Activated B cell treated with CpG ODN at 0.5 μM for 24 hours (primary cell): ENCODE measurements at regions of chr15 and their contacts with region 1.

Region 1: DNA sequence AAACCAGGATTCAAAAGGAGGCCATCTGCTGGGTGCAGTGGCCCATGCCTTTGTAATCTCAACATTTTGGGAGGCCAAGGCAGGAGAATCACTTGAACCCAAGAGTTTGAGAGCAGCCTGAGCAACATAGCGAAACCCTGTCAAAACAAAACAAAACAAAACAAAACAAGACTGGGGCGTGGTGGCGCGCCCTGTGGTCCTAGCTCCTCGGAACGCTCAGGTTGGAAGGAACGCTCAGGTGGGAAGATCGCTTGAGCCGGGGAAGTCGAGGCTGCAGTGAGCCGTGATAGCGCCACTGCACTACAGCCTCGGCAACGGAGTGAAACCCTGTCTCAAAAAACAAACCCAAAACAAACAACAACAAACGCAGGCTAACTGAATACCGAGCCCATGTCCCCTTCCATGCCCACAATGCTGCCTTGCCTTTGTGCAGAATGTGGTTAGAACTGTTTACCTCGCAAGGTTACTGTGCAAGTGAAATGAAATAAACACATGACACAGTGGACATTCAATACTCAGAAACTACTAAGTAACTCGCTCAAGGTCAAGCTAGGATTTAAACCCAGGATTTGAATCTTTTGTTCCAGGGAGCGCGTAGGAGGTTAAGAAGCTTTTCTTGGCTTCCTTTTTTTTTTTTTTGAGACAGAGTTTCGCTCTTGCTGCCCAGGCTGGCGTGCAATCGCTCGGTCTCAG is 766 bp upstream of the EMC4 start:
- DNase-seq: no peak
- ATAC-seq: peak; percentile 7
- H3K4me3 Mint-ChIP-seq: peak overlapping the region; percentile 92
- H3K27ac Mint-ChIP-seq: peak overlapping the region; percentile 96
- H3K4me1 Mint-ChIP-seq: peaks cover 27% of the 10 kb centered on the region
- H3K27me3 Mint-ChIP-seq: peaks cover 1% of the 10 kb centered on the region
- CTCF ChIP-seq: no peak

Region 2: GRCh38 chr15:33623010-33623409 is 601.0 kb before region 1 on chr15:
- CTCF ChIA-PET with region 1: no interaction called
- POLR2A ChIA-PET with region 1: no interaction called
- intact Hi-C with region 1: no loop called
- DNase-seq: no peak
- ATAC-seq: no peak
- H3K4me3 Mint-ChIP-seq: no peak overlapping the region
- H3K27ac Mint-ChIP-seq: no peak overlapping the region
- H3K4me1 Mint-ChIP-seq: no peaks in the 10 kb centered on the region
- H3K27me3 Mint-ChIP-seq: peaks cover 3% of the 10 kb centered on the region
- CTCF ChIP-seq: no peak

Region 3: GRCh38 chr15:34337557-34338306 is 113.7 kb after region 1 on chr15 and contains the start of gene SLC12A6:
- CTCF ChIA-PET with region 1: no interaction called
- POLR2A ChIA-PET with region 1: interaction called, 11 read pairs
- intact Hi-C with region 1: no loop called
- DNase-seq: peak; percentile 93
- ATAC-seq: peak; percentile 82
- H3K4me3 Mint-ChIP-seq: peak within 1 kb of the TSS; percentile 99
- H3K27ac Mint-ChIP-seq: peak within 1 kb of the TSS; percentile 99
- H3K4me1 Mint-ChIP-seq: peaks cover 66% of the 10 kb centered on the region
- H3K27me3 Mint-ChIP-seq: no peaks in the 10 kb centered on the region
- CTCF ChIP-seq: no peak
- total RNA-seq, gene SLC12A6: 61.3 and 74.4 TPM in 2 replicates